ENCODE measurements at regions of chr17 and their contacts with region 1.

Region 1: DNA sequence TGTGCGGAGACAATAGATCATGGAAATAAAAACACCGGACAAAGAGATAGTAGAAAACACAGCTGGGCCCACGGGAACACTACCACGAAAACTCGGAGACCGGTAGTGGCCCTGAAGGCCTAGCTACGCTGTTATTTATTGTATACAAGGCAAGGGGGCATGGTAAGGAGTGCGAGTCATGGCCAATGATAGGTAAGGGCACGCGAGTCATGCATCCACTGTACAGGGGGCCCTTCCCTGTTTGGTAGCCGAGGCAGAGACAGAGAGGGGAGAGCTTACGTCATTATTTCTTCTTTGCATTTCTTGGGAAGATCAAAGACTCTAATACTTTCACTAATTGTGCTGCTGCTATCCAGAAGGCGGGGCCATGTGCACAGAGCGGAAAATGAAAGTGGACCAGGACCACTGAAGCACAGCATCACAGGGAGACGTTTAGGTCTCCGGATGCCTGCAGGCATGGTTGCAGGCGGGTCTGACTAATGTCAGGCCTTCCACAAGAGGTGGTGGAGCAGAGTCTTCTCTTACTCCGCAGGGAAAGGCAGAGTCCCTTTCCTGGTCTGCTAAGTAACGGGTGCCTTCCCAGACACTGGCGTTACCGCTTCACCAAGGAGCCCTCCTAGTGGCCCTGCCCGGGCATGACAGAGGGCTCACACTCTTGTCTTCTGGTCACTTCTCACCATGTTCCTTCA is 74.4 kb upstream of the ARL4D start:
- ATAC-seq: peak in 1 of 8 experiments; percentile 34
- H3K4me3 ChIP-seq: no peak overlapping the region
- H3K27ac ChIP-seq: no peak overlapping the region
- H3K4me1 ChIP-seq: no peaks in the 10 kb centered on the region

Region 2: GRCh38 chr17:43211480-43212402 is 112.6 kb before region 1 on chr17 and contains the start of gene TMEM106A:
- in situ Hi-C with region 1: loop called in 2 of 9 experiments (anchors 25 kb)
- ATAC-seq: peak; percentile 41 to 90 (median 82)
- H3K4me3 ChIP-seq: peak within 1 kb of the TSS in 2 of 5 donors; percentile 14 to 37
- H3K27ac ChIP-seq: no peak within 1 kb of the TSS
- H3K4me1 ChIP-seq: no peaks in the 10 kb centered on the region
- total RNA-seq, gene TMEM106A: 0.27 to 7.8 (median 0.95) TPM